Activated CD8-positive, alpha-beta T cell treated with anti-CD3 and anti-CD28 coated beads, Interleukin-2, amount 10 ng/mL, durations not matched to agents 7 days and 5 days (primary cell): ENCODE measurements at regions of chr6 and their contacts with region 1.

Region 1: DNA sequence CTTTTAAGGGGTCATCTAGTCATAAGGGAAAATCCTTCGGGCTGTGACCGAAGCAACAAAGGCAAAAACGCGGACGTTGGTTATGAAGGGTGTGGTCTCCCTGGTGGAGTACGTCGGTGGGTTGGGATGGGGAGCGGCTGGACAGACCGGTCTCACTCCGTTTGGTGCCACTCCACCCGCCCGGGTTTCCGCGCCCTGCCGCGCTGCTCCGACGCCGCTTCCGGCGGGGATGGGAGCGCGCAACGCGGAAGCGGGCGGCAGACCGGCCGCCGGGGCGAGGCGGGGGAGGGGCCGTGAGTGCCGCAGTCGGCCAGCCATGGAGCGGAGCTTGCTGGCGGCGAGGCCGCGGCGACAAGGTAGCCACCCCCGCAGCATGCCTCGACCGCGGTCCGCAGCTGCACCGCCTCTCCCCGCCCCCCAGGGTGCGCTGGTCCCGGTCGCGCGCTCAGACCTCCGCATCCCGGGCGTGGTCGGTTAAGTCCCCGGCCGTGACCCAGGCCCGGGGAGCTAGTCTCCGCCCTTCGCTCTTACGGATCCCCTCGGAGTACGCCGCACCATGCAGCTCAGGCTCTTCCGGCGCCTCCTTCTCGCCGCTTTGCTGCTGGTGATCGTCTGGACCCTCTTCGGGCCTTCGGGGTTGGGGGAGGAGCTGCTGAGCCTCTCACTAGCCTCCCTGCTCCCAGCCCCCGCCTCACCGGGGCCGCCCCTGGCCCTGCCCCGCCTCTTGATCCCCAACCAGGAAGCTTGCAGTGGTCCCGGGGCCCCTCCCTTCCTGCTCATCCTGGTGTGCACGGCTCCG is at the start of gene B3GALT4:
- DNase-seq: peak; percentile 81
- ATAC-seq: peak; percentile 74
- H3K4me3 Mint-ChIP-seq: peak within 1 kb of the TSS; percentile 99
- H3K27ac Mint-ChIP-seq: peak within 1 kb of the TSS; percentile 97
- H3K4me1 Mint-ChIP-seq: peaks cover 64% of the 10 kb centered on the region
- H3K27me3 Mint-ChIP-seq: no peaks in the 10 kb centered on the region
- total RNA-seq, gene B3GALT4: 12.2 to 12.8 TPM

Region 2: GRCh38 chr6:33217681-33218080 is 59.4 kb before region 1 on chr6:
- CTCF ChIA-PET with region 1: no interaction called
- POLR2A ChIA-PET with region 1: no interaction called
- DNase-seq: no peak
- ATAC-seq: no peak
- H3K4me3 Mint-ChIP-seq: no peak overlapping the region
- H3K27ac Mint-ChIP-seq: no peak overlapping the region
- H3K4me1 Mint-ChIP-seq: peaks cover 36% of the 10 kb centered on the region
- H3K27me3 Mint-ChIP-seq: peaks cover 21% of the 10 kb centered on the region

Region 3: GRCh38 chr6:33288921-33289748 is 12.1 kb after region 1 on chr6 and contains the starts of genes PFDN6 and WDR46:
- CTCF ChIA-PET with region 1: interaction called, 28 read pairs
- POLR2A ChIA-PET with region 1: interaction called, 50 read pairs
- DNase-seq: peak; percentile 93
- ATAC-seq: peak; percentile 97
- H3K4me3 Mint-ChIP-seq: peak within 1 kb of the TSS; percentile 97
- H3K27ac Mint-ChIP-seq: peak within 1 kb of the TSS; percentile 87
- H3K4me1 Mint-ChIP-seq: peaks cover 46% of the 10 kb centered on the region
- H3K27me3 Mint-ChIP-seq: no peaks in the 10 kb centered on the region
- total RNA-seq, gene PFDN6: 72.0 to 78.4 TPM
- total RNA-seq, gene WDR46: 66.7 to 68.9 TPM

Region 4: DNA sequence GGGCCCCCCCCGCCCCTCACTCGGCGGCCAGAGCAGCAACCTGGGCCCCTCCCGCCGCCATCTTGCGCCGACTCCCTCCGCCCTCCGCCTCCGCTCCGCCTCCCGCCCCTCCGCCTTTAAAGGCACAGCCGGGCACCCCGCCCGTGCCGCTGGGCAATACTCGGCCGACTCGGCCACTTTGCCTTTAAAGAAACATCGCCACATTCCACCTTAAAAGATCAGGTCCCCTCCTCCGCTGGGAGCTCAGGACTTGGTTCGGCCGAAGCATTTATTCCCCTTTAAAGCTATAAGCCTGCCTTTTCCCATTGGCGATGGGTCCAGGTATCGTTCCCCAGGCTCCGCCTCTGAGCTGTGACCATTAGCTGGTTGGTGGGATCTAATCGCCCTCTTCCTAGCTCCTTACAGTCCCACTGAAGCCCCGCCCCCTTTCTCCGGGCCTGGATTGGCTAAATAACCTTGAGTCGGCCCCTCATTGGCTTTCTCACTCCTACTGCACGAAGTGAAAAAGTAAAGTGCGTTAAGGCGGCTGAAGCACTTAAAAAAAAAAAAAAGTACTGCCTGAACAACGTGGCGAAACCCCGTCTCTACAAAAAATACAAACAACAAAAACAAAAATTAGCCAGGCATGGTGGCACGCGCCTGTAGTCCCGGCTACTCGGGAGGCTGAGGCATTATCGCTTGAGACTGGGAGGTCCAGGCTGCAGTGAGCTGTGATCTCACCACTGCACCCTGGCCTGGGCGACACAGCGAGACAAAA is 40.8 kb after region 1 on chr6 and contains the start of gene ZBTB22:
- CTCF ChIA-PET with region 1: interaction called, 4 read pairs
- POLR2A ChIA-PET with region 1: interaction called, 15 read pairs
- DNase-seq: peak; percentile 98
- ATAC-seq: peak; percentile 70
- H3K4me3 Mint-ChIP-seq: peak within 1 kb of the TSS; percentile 97
- H3K27ac Mint-ChIP-seq: peak within 1 kb of the TSS; percentile 96
- H3K4me1 Mint-ChIP-seq: peaks cover 78% of the 10 kb centered on the region
- H3K27me3 Mint-ChIP-seq: no peaks in the 10 kb centered on the region
- total RNA-seq, gene ZBTB22: 10.7 to 11.1 TPM

Region 5: GRCh38 chr6:33344701-33345697 is 67.9 kb after region 1 on chr6:
- CTCF ChIA-PET with region 1: interaction called, 4 read pairs
- POLR2A ChIA-PET with region 1: interaction called, 15 read pairs
- DNase-seq: peak; percentile 85
- ATAC-seq: peak; percentile 68
- H3K4me3 Mint-ChIP-seq: peak overlapping the region; percentile 69
- H3K27ac Mint-ChIP-seq: peak overlapping the region; percentile 94
- H3K4me1 Mint-ChIP-seq: peaks cover 40% of the 10 kb centered on the region
- H3K27me3 Mint-ChIP-seq: no peaks in the 10 kb centered on the region

Region 6: DNA sequence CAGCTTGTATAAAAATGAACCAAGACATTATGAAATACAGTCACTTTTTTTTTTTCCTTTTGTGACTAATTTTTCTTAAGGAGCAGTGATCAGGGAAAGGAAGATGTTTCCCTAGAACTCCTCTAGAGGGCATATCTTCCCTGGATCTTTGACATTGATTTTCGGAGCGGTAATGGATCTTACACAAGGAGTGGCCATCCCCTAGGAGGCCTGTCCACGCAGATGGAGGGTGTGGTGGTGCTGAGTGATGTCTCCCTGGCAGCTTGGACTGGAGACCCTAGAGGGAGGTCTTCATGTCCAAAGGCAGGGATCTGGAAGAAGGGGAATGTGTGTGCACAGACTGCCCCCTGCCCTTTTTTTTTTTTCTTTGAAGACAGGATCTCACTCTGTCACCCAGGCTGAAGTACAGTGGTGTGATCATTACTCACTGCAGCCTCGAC is 107.5 kb after region 1 on chr6:
- CTCF ChIA-PET with region 1: no interaction called
- POLR2A ChIA-PET with region 1: no interaction called
- DNase-seq: no peak
- ATAC-seq: no peak
- H3K4me3 Mint-ChIP-seq: no peak overlapping the region
- H3K27ac Mint-ChIP-seq: no peak overlapping the region
- H3K4me1 Mint-ChIP-seq: no peaks in the 10 kb centered on the region
- H3K27me3 Mint-ChIP-seq: peaks cover 8% of the 10 kb centered on the region